ENCODE measurements at regions of chr14 and their contacts with region 1.

Region 1: DNA sequence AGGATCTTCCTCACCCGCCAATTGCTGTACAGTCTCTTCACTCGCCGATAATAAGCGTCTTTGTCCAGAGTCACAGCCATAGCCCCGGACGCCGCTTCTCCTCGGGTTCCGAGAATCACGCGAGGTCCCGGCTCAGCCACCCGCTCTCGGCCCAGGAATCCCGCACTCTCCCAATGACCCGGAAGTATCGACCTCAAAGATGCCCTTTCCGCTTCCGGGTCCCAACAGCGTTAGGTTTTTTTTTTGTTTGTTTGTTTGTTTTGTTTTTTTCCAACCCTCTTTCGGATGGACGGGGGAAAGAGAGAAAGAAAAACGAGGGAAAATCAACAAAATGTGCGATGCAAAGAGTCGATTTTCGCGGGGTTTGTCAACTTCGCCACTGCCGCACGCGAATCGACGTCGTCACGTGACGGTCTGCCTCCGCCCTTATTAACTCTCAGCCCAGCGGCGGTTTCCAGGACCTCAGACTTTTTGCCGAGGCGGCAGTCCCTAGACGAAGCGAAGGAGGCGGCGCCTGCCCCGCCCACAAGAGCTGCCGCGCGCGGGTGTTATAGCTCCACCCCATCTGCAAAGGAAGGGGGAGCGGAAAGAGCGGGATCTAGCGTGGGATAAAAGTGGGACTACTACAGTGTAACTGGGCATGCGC is at the start of gene SUPT16H:
- DNase-seq: peak; percentile 97
- H3K4me3 Mint-ChIP-seq: peak within 1 kb of the TSS; percentile 95
- H3K27ac Mint-ChIP-seq: peak within 1 kb of the TSS; percentile 97
- H3K4me1 Mint-ChIP-seq: peaks cover 44% of the 10 kb centered on the region
- H3K27me3 Mint-ChIP-seq: no peaks in the 10 kb centered on the region
- total RNA-seq, gene SUPT16H: 114 TPM

Region 2: GRCh38 chr14:21269252-21270046 is 114.5 kb before region 1 on chr14 and contains the start of gene HNRNPC:
- CTCF ChIA-PET with region 1: interaction called, 4 read pairs
- POLR2A ChIA-PET with region 1: interaction called, 68 read pairs
- DNase-seq: peak; percentile 100
- H3K4me3 Mint-ChIP-seq: peak within 1 kb of the TSS; percentile 99
- H3K27ac Mint-ChIP-seq: peak within 1 kb of the TSS; percentile 99
- H3K4me1 Mint-ChIP-seq: peaks cover 36% of the 10 kb centered on the region
- H3K27me3 Mint-ChIP-seq: no peaks in the 10 kb centered on the region
- total RNA-seq, gene HNRNPC: 689 to 710 TPM

Region 3: GRCh38 chr14:21437063-21437901 is 53.3 kb after region 1 on chr14:
- CTCF ChIA-PET with region 1: no interaction called
- POLR2A ChIA-PET with region 1: interaction called, 22 read pairs
- DNase-seq: peak; percentile 99
- H3K4me3 Mint-ChIP-seq: peak overlapping the region; percentile 86
- H3K27ac Mint-ChIP-seq: peak overlapping the region; percentile 76
- H3K4me1 Mint-ChIP-seq: peaks cover 50% of the 10 kb centered on the region
- H3K27me3 Mint-ChIP-seq: no peaks in the 10 kb centered on the region

Region 4: GRCh38 chr14:22084393-22085281 is 700.7 kb after region 1 on chr14:
- CTCF ChIA-PET with region 1: no interaction called
- POLR2A ChIA-PET with region 1: no interaction called
- DNase-seq: no peak
- H3K4me3 Mint-ChIP-seq: peak overlapping the region; percentile 56
- H3K27ac Mint-ChIP-seq: peak overlapping the region; percentile 66
- H3K4me1 Mint-ChIP-seq: peaks cover 24% of the 10 kb centered on the region
- H3K27me3 Mint-ChIP-seq: no peaks in the 10 kb centered on the region

Measured in activated CD4-positive, alpha-beta memory T cell treated with anti-CD3 and anti-CD28 coated beads, Interleukin-2, amount 10 ng/mL, durations not matched to agents 7 days and 5 days (primary cell).